ENCODE measurements at regions of chr5 and their contacts with region 1.

Region 1: DNA sequence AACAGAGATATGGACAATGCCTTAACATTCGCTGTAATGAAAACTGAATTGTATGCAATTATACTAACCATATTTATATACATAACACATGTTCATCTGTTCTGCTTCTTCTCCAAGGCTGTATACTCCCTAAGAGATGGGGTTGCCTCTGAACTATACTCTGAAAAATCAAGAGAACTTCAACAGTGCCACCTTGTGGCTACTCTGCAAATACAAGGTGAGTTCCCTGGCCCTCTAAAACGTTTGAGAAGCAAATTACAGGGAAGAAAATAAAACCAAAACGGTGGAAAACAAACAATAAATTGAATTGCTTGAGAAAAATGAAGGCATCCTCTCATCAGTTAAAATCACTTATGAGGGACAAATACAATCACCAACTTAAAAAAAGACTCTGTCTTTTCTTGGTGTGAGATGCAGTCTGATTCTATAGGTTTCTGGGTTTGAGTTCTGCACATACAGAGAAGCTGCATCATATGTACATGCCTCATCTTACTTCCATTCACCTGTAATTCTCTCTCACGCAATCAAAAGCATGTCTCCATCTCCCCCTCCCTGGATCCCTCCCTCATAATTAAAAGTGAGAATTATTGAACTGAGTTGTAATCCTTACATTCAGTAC is 98.6 kb downstream of the FBXW11 start:
- DNase-seq: peak; percentile 56
- ATAC-seq: peak; percentile 87
- H3K4me3 ChIP-seq: no peak overlapping the region
- H3K27ac ChIP-seq: no peak overlapping the region
- H3K4me1 ChIP-seq: no peaks in the 10 kb centered on the region
- H3K27me3 ChIP-seq: no peaks in the 10 kb centered on the region
- CTCF ChIP-seq: peak; percentile 70
- EP300 ChIP-seq: no peak
- POLR2A ChIP-seq: no peak
- RAD21 ChIP-seq: no peak

Region 2: DNA sequence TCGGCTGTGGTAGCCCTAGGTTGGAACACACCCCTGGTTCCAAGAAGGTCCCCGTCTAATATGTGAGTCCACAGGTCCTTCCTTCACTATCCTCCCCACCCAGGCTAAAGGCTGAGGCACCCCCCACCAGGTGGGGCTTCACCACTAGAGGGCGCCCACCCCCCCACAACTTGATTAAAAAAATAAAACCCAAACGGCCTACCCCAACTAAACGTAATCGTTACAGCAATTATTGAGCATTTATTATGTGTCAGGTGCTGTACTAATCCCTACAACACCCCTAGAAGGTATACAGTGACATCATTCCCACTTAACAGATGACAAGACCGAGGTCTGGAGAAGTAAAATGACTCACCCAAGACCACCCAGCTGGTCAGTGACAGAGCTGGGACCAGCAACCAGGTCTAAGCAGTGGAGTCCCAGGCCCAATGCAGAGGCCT is 423.4 kb before region 1 on chr5:
- CTCF ChIA-PET with region 1: interaction called, 11 read pairs
- POLR2A ChIA-PET with region 1: no interaction called
- in situ Hi-C with region 1: no loop called
- intact Hi-C with region 1: loop called (anchors 2 kb)
- DNase-seq: no peak
- ATAC-seq: peak; percentile 77
- H3K4me3 ChIP-seq: no peak overlapping the region
- H3K27ac ChIP-seq: no peak overlapping the region
- H3K4me1 ChIP-seq: no peaks in the 10 kb centered on the region
- H3K27me3 ChIP-seq: peaks cover 6 to 20% of the 10 kb centered on the region in 2 experiments; a peak in 2 of 5 replicates
- CTCF ChIP-seq: peak; percentile 60
- EP300 ChIP-seq: no peak
- POLR2A ChIP-seq: no peak
- RAD21 ChIP-seq: no peak

Region 3: DNA sequence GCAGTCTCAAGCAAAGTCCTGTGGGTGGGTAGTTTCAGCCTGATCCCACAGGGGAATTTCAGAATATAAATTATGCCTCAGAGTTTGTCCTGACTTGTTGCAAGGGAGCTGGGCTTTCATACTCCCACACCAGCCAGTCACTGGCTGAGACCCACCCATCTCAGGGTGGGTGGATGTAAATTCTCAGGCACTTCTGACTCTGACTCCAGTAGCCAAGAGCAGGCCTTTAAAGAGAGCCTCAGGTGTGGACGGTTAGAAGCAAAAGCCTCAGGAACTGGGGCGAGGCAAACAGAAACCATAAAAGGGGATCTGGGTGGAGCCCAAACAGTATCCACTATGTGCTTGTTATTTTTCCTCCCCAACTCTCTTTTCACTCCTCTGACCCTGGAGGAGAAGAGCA is 127.2 kb after region 1 on chr5:
- CTCF ChIA-PET with region 1: interaction called, 41 read pairs
- POLR2A ChIA-PET with region 1: no interaction called
- in situ Hi-C with region 1: loop called (anchors 5 kb)
- intact Hi-C with region 1: loop called (anchors 1 kb)
- DNase-seq: no peak
- ATAC-seq: no peak
- H3K4me3 ChIP-seq: no peak overlapping the region
- H3K27ac ChIP-seq: no peak overlapping the region
- H3K4me1 ChIP-seq: peaks cover 4% of the 10 kb centered on the region; the same call in 1 of the 2 replicates
- H3K27me3 ChIP-seq: no peaks in the 10 kb centered on the region; a peak in 1 of 5 replicates
- CTCF ChIP-seq: no peak
- EP300 ChIP-seq: no peak
- POLR2A ChIP-seq: no peak
- RAD21 ChIP-seq: no peak

Region 4: GRCh38 chr5:172059661-172060100 is 151.8 kb after region 1 on chr5:
- CTCF ChIA-PET with region 1: interaction called, 9 read pairs
- POLR2A ChIA-PET with region 1: no interaction called
- in situ Hi-C with region 1: no loop called
- intact Hi-C with region 1: loop called (anchors 1 kb)
- DNase-seq: peak; percentile 19
- ATAC-seq: peak; percentile 79
- H3K4me3 ChIP-seq: no peak overlapping the region
- H3K27ac ChIP-seq: no peak overlapping the region
- H3K4me1 ChIP-seq: no peaks in the 10 kb centered on the region
- H3K27me3 ChIP-seq: no peaks in the 10 kb centered on the region
- CTCF ChIP-seq: peak; percentile 78
- EP300 ChIP-seq: no peak
- POLR2A ChIP-seq: no peak
- RAD21 ChIP-seq: peak; percentile 36; the same call in 1 of the 2 replicates

Region 5: DNA sequence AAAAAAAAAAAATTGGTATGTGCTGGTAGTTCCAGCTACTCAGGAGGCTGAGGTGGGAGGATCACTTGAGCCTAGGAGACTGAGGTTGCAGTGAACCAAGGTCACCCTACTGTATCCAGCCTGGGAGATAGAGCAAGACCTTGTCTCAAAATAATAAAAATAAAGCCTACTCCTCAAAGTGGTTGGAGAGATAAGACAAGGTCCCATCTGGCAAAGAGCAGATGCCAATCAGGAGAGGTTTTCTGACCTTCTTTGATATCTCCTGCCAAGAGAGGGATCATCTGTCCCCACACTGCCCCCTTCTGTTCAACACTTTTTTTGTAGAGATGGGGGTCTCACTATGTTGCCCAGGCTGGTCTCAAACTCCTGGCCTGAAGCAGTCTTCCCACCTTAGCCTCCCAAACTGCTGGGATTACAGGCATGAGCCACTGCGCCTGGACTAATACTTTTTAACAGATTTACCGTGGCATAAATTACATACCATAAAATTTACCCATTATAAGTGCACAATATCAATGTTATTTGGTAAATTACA is 481.8 kb after region 1 on chr5:
- CTCF ChIA-PET with region 1: no interaction called
- POLR2A ChIA-PET with region 1: no interaction called
- in situ Hi-C with region 1: no loop called
- intact Hi-C with region 1: no loop called
- DNase-seq: no peak
- ATAC-seq: no peak
- H3K4me3 ChIP-seq: no peak overlapping the region
- H3K27ac ChIP-seq: no peak overlapping the region
- H3K4me1 ChIP-seq: 0 out of 2 replicates have a peak, but pooled peaks cover 1% of the 10 kb centered on the region
- H3K27me3 ChIP-seq: no peaks in the 10 kb centered on the region
- CTCF ChIP-seq: peak; percentile 41
- EP300 ChIP-seq: no peak
- POLR2A ChIP-seq: no peak
- RAD21 ChIP-seq: no peak

Measured in HepG2 (cell line).